ENCODE measurements at regions of chr1 and their contacts with region 1.

Region 1: GRCh38 chr1:68232354-68233148 is at the start of gene WLS:
- DNase-seq: peak; percentile 83 to 90 (median 87)
- ATAC-seq: peak; percentile 77 to 88 (median 87)
- H3K4me3 ChIP-seq: peak within 1 kb of the TSS; percentile 58 to 93 (median 78)
- H3K27ac ChIP-seq: peak within 1 kb of the TSS; percentile 47 to 93 (median 83)
- H3K4me1 ChIP-seq: peaks cover 0 to 39% (median 15%) of the 10 kb centered on the region in 12 donors
- H3K27me3 ChIP-seq: peaks cover 0 to 13% (median 0%) of the 10 kb centered on the region in 9 donors
- CTCF ChIP-seq: peak in 3 of 12 donors; percentile 9 to 35 (median 30)
- POLR2A ChIP-seq: peak; percentile 57 to 81
- total RNA-seq, gene WLS: 78.2 to 115 (median 107) TPM

Region 2: GRCh38 chr1:68168545-68169171 is 63.9 kb before region 1 on chr1:
- intact Hi-C with region 1: loop called in 5 of 10 experiments (anchors 5 to 10 kb)
- DNase-seq: no peak
- ATAC-seq: peak in 2 of 4 donors; percentile 36 to 55
- H3K4me3 ChIP-seq: no peak overlapping the region
- H3K27ac ChIP-seq: peak overlapping the region in 6 of 12 donors; percentile 3 to 45 (median 32)
- H3K4me1 ChIP-seq: peaks cover 0 to 45% (median 22%) of the 10 kb centered on the region in 12 donors
- H3K27me3 ChIP-seq: no peaks in the 10 kb centered on the region
- CTCF ChIP-seq: no peak
- POLR2A ChIP-seq: no peak

Region 3: DNA sequence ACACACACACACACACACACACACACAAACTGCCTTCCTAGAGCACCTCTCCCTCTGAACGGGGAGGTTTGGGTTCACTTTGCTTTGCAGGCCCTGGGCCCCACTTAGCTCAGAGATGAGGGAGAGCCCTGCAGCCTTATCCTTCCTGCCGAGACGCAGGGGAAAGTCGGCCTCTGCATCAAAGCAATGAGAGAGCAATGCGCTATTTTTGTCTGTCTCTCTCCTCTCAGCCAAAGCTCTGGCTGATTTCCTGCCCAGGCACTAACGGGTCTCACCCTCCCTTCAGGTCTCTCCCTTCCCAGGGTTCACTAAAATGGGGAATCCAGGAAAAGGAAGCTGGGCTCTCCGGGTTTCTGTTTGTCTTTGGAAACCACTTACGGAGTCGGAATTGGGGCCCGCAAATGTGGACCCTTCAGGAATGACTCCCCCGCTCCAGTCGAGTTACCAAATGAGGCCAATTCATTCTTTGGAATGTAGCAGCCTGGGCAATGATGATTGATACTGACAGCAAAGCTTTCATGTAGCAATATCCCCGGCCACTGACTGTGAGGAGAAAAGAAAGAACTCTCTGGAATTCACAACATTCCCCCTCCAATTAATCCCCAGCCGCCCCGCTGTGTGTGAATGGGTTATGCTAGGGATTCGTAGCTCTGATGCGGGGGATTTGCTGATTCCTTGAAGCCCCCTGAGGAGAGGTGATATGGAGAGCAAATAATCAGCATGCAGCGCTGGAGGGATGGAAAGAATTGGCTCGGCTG is 61.2 kb after region 1 on chr1:
- intact Hi-C with region 1: loop called in 3 of 10 experiments (anchors 5 to 10 kb)
- DNase-seq: peak in 4 of 5 donors; percentile 31 to 54 (median 46)
- ATAC-seq: peak; percentile 76 to 93 (median 88)
- H3K4me3 ChIP-seq: no peak overlapping the region
- H3K27ac ChIP-seq: peak overlapping the region in 4 of 12 donors; percentile 14 to 55 (median 34)
- H3K4me1 ChIP-seq: peaks cover 0 to 29% (median 22%) of the 10 kb centered on the region in 12 donors
- H3K27me3 ChIP-seq: no peaks in the 10 kb centered on the region
- CTCF ChIP-seq: no peak
- POLR2A ChIP-seq: no peak

Region 4: GRCh38 chr1:68321084-68321685 is 88.6 kb after region 1 on chr1:
- intact Hi-C with region 1: loop called in 4 of 10 experiments (anchors 2 to 10 kb)
- DNase-seq: peak; percentile 62 to 78 (median 67)
- ATAC-seq: peak; percentile 80 to 97 (median 92)
- H3K4me3 ChIP-seq: no peak overlapping the region
- H3K27ac ChIP-seq: peak overlapping the region in 1 of 12 donors; percentile 26
- H3K4me1 ChIP-seq: no peaks in the 10 kb centered on the region
- H3K27me3 ChIP-seq: no peaks in the 10 kb centered on the region
- CTCF ChIP-seq: peak; percentile 41 to 81 (median 74)
- POLR2A ChIP-seq: no peak

Region 5: GRCh38 chr1:69038379-69038778 is 805.8 kb after region 1 on chr1:
- intact Hi-C with region 1: no loop called
- DNase-seq: no peak
- ATAC-seq: no peak
- H3K4me3 ChIP-seq: no peak overlapping the region
- H3K27ac ChIP-seq: no peak overlapping the region
- H3K4me1 ChIP-seq: no peaks in the 10 kb centered on the region
- H3K27me3 ChIP-seq: no peaks in the 10 kb centered on the region
- CTCF ChIP-seq: no peak
- POLR2A ChIP-seq: no peak